ENCODE measurements at regions of chr10 and their contacts with region 1.

Region 1: DNA sequence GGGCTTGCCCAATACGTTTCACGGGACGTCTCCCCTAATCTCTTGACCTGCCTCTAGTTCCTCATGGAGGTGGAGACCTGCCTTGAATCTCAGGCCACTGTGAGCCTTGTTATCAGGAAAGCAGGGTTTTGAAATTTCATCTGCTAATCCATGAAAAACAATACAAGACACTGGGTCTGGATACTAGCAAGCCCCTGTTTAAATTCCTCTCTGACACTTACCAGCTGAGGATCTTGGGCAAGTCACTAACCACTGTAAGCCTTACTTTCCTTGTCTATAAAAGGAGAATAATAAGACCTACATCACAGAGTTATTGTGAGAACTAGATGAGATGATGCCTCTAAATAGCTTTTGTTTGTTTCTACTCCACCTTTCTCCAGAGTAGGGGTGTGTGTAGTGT is 303.6 kb downstream of the FGFR2 start:
- DNase-seq: no peak
- ATAC-seq: no peak
- H3K4me3 ChIP-seq: no peak overlapping the region
- H3K4me3 Mint-ChIP-seq: no peak overlapping the region
- H3K27ac ChIP-seq: no peak overlapping the region
- H3K27ac Mint-ChIP-seq: no peak overlapping the region
- H3K4me1 ChIP-seq: no peaks in the 10 kb centered on the region
- H3K4me1 Mint-ChIP-seq: no peaks in the 10 kb centered on the region
- H3K27me3 ChIP-seq: peaks cover 0 to 16% of the 10 kb centered on the region in 2 experiments
- H3K27me3 Mint-ChIP-seq: peaks cover 0 to 9% of the 10 kb centered on the region in 2 donors

Region 2: DNA sequence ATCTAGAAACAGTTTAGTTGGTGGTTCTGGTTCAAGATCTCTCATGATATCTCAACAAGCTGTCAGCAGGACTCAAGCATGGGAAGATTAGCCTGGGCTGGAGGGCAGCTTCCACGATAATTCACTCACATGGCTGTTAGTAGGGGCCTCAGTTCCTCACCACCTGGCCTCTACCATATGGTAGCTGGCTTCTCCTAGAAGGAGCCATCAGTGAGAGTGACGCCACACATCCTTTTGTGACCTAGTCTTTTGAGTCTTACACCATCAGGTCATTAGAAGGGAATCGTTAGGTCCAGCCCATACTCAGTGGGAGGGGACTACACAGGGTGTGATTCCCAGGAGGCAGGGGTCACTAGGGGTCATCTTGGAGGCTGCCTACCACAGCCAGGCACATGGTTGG is 1076.9 kb before region 1 on chr10:
- CTCF ChIA-PET with region 1: no interaction called
- POLR2A ChIA-PET with region 1: no interaction called
- DNase-seq: no peak
- ATAC-seq: no peak
- H3K4me3 ChIP-seq: no peak overlapping the region
- H3K4me3 Mint-ChIP-seq: no peak overlapping the region
- H3K27ac ChIP-seq: no peak overlapping the region
- H3K27ac Mint-ChIP-seq: no peak overlapping the region
- H3K4me1 ChIP-seq: no peaks in the 10 kb centered on the region
- H3K4me1 Mint-ChIP-seq: no peaks in the 10 kb centered on the region
- H3K27me3 ChIP-seq: peaks cover 0 to 2% of the 10 kb centered on the region in 2 experiments
- H3K27me3 Mint-ChIP-seq: peaks cover 0 to 5% of the 10 kb centered on the region in 2 donors

Region 3: GRCh38 chr10:121058082-121058481 is 236.5 kb before region 1 on chr10:
- CTCF ChIA-PET with region 1: no interaction called
- POLR2A ChIA-PET with region 1: interaction called in 1 of 2 experiments, 11 read pairs
- DNase-seq: no peak
- ATAC-seq: no peak
- H3K4me3 ChIP-seq: no peak overlapping the region
- H3K4me3 Mint-ChIP-seq: no peak overlapping the region
- H3K27ac ChIP-seq: no peak overlapping the region
- H3K27ac Mint-ChIP-seq: no peak overlapping the region
- H3K4me1 ChIP-seq: no peaks in the 10 kb centered on the region
- H3K4me1 Mint-ChIP-seq: no peaks in the 10 kb centered on the region
- H3K27me3 ChIP-seq: peaks cover 0 to 3% of the 10 kb centered on the region in 2 experiments
- H3K27me3 Mint-ChIP-seq: peaks cover 0 to 3% of the 10 kb centered on the region in 2 donors

Measured in T-cell (primary cell).